Left cardiac atrium (tissue), 4 donors: ENCODE measurements at regions of chr11 and their contacts with region 1.

Region 1: DNA sequence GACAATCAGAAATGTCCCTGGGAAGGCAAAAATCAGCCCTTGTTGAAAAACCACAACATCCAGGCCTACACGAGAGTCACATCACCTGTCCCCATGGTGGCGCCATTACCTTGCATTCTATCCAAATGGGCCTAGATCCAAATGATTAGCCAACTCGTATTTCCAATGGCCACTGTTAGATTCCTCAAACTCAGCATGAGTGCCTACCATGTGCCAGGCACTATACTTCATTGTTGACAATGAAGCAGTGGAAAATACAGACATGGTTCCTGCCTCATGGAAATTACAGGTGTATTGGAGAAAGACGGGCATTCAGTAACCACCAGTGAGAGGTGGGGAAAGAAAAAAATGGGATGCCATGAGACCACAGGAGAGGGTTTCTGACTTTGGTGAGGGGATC is 29.8 kb upstream of the CREB3L1 start:
- DNase-seq: no peak
- ATAC-seq: no peak

Region 2: DNA sequence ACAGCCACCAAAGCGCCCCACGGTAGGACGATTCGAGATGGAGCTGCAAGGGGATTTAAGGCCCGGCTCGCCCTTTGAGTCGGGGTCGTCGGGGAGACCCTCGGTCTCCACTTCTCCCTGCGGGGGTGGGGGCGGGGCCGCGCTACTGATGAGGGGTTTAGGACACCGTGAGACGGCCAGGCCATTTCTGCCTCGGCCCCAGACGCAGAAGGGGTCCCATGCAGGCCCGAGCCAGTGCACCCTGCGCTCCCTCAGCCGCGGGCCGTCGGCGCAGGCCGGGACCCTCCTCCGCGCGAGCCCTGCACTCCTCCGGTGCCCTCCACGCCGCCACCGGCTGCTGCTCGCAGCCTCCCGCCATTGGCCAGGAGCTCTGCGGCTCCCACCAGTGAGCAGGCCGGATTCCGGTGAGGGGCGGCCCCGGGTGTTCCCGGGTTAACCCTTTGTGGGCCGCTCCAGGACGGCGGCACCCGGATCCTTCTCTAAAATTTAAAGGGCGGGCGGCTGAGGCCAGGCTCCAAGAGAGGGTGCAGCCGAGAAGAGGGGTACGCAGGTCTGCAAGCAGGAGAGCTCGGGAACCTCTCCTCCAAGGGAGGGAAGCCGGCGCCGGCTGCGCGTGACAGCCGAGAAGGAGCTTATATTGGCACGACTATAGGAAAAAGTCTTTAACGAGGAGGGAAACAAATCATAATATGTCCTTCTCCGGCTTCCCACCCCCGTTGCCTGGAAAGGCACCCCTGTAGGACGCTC is 47.8 kb after region 1 on chr11:
- intact Hi-C with region 1: loop called in 1 of 2 experiments (anchors 5 kb)
- DNase-seq: peak; percentile 85
- ATAC-seq: peak; percentile 91 to 94